CD8-positive, alpha-beta T cell (primary cell): ENCODE measurements at regions of chr3 and their contacts with region 1.

Region 1: DNA sequence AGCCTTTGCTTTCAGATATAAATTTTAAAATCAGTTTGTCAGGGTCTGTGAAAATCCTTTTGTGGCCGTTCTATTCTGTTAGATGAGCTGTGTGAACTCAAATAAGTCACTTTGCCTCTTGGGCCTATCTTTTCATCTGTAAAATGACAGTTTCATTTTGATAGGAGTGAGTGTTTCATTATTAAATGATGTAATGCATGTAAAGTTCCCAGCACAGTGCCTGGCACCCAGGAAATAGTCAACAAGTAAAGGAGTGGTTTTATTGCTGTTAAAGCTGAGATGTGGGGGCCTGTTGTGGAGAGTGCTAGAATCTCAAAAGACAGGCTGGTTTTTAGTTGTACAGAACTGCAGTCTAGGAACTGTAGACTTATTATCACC is 394.5 kb upstream of the CFAP20DC start:
- DNase-seq: peak in 2 of 9 experiments; percentile 38 to 63
- ATAC-seq: peak; percentile 76
- H3K4me3 ChIP-seq: peak overlapping the region in 1 of 2 experiments; percentile 6
- H3K4me3 Mint-ChIP-seq: peak overlapping the region; percentile 60
- H3K27ac ChIP-seq: peak overlapping the region; percentile 47 to 69
- H3K27ac Mint-ChIP-seq: peak overlapping the region; percentile 92
- H3K4me1 ChIP-seq: peaks cover 36% of the 10 kb centered on the region
- H3K4me1 Mint-ChIP-seq: peaks cover 65% of the 10 kb centered on the region
- H3K27me3 ChIP-seq: no peaks in the 10 kb centered on the region
- H3K27me3 Mint-ChIP-seq: no peaks in the 10 kb centered on the region
- CTCF ChIP-seq: no peak

Region 2: DNA sequence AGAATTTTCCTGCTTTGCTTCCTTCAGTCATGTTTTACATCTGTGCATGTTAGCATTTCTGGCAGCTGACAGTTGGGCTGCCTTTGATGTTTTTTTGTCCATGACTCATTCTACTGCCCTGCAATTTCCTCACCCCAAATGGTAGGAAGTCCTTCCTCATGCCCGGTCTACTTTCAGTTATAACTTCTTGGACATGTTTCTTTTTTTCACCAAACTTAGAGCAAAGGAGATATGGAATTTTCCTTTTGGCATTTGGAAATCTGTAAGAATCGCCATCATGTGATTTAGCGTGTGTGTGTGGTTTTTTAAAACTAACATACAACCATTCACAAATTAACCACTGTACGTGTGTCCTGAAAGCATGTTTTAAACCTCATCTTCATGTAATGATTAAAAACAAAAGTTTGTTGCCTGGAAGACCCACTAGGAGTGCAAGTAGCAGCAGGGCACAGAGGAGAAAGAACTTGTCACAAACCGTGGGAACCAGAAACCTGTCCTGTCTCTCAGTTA is 36.3 kb after region 1 on chr3:
- CTCF ChIA-PET with region 1: interaction called, 4 read pairs
- POLR2A ChIA-PET with region 1: interaction called, 3 read pairs
- intact Hi-C with region 1: loop called in 1 of 2 experiments (anchors 5 kb)
- DNase-seq: peak in 2 of 9 experiments; percentile 11 to 25
- ATAC-seq: no peak
- H3K4me3 ChIP-seq: no peak overlapping the region
- H3K4me3 Mint-ChIP-seq: peak overlapping the region; percentile 22
- H3K27ac ChIP-seq: no peak overlapping the region
- H3K27ac Mint-ChIP-seq: no peak overlapping the region
- H3K4me1 ChIP-seq: peaks cover 4% of the 10 kb centered on the region
- H3K4me1 Mint-ChIP-seq: peaks cover 9% of the 10 kb centered on the region
- H3K27me3 ChIP-seq: no peaks in the 10 kb centered on the region
- H3K27me3 Mint-ChIP-seq: no peaks in the 10 kb centered on the region
- CTCF ChIP-seq: no peak

Region 3: DNA sequence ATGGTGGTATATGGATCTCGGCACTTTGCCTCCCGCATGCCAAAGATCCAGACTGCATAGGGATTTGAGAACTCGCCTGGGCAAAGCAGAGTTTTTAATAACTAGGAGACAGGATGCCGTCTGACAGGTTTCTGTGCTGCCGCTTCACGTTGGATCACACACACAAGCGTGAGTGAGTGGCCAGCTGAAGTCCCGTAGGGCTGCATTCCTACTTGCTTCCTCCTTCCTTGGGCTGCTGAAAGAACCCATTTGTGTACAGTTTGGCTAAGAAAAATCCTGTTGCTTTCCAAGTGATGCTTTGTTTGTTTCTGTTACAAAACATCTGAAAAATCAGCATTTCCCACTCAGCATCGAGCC is 209.8 kb after region 1 on chr3:
- CTCF ChIA-PET with region 1: no interaction called
- POLR2A ChIA-PET with region 1: no interaction called
- intact Hi-C with region 1: no loop called
- DNase-seq: no peak
- ATAC-seq: no peak
- H3K4me3 ChIP-seq: no peak overlapping the region
- H3K4me3 Mint-ChIP-seq: no peak overlapping the region
- H3K27ac ChIP-seq: no peak overlapping the region
- H3K27ac Mint-ChIP-seq: no peak overlapping the region
- H3K4me1 ChIP-seq: no peaks in the 10 kb centered on the region
- H3K4me1 Mint-ChIP-seq: no peaks in the 10 kb centered on the region
- H3K27me3 ChIP-seq: no peaks in the 10 kb centered on the region
- H3K27me3 Mint-ChIP-seq: no peaks in the 10 kb centered on the region
- CTCF ChIP-seq: no peak